H1 (cell line): ENCODE measurements at regions of chr19 and their contacts with region 1.

Region 1: GRCh38 chr19:49817964-49818648 is at the start of gene MED25:
- DNase-seq: peak in 1 of 2 experiments; percentile 95
- H3K4me3 ChIP-seq: peak within 1 kb of the TSS; percentile 60 to 91 (median 82)
- H3K27ac ChIP-seq: peak within 1 kb of the TSS; percentile 91
- H3K4me1 ChIP-seq: peaks cover 0 to 7% (median 4%) of the 10 kb centered on the region in 4 experiments; a peak in 3 of 7 replicates
- H3K27me3 ChIP-seq: no peaks in the 10 kb centered on the region
- CTCF ChIP-seq: no peak
- EP300 ChIP-seq: no peak
- POLR2A ChIP-seq: peak; percentile 63 to 78
- RAD21 ChIP-seq: no peak
- total RNA-seq, gene MED25: 71.4 and 73.9 TPM in 2 replicates

Region 2: DNA sequence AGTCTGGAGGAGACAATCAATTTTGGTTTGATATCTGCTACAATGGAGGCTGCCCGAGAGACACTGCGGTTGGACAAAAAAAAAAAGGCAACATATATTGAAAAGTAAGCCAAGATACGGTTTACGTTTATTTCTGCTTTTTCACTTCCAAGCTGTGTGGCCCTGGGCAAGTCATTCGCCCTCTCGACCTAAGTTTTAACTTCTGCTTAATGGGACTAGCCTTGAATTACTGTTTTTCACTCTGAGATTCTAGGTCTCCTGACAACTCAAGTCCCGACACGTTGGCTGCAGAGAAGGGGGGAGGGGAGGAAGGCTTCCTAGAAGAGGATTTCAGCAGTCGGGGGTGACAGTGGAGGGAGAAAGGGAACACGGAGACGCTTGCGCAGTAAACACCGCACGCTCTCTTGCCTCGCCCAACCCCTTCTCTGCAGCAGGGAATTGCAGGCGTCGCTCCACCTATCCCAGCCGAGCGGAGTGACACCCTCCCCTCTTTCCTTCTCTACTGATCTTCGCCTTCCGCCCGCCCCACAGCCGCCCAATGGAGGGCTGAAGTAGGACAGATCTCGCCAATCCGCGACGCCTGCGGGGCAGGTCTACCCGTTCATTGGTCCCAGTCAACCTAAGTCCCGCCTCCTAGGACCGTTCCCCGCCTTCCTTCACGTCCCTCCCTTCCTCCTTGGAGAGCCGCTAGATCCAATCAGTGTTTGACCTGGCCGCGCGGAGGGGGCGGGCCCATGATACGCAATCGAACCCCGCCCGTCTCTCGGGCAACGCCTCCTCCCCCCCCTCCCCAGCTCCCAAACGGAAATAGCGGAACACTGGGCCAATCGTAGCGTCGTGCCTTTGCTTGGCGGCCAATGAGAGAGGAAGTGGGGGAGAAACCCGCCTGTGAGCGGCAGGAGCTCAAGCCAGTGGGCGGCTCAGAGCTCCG is 51.8 kb before region 1 on chr19:
- CTCF ChIA-PET with region 1: no interaction called
- POLR2A ChIA-PET with region 1: interaction called, 15 read pairs
- DNase-seq: peak; percentile 96 to 100
- H3K4me3 ChIP-seq: peak overlapping the region; percentile 1 to 60 (median 35); a peak in 7 of 8 replicates
- H3K27ac ChIP-seq: peak overlapping the region; percentile 97
- H3K4me1 ChIP-seq: peaks cover 0 to 7% (median 3%) of the 10 kb centered on the region in 4 experiments; a peak in 5 of 7 replicates
- H3K27me3 ChIP-seq: no peaks in the 10 kb centered on the region
- CTCF ChIP-seq: no peak
- EP300 ChIP-seq: no peak
- POLR2A ChIP-seq: peak; percentile 54 to 98
- RAD21 ChIP-seq: no peak

Region 3: DNA sequence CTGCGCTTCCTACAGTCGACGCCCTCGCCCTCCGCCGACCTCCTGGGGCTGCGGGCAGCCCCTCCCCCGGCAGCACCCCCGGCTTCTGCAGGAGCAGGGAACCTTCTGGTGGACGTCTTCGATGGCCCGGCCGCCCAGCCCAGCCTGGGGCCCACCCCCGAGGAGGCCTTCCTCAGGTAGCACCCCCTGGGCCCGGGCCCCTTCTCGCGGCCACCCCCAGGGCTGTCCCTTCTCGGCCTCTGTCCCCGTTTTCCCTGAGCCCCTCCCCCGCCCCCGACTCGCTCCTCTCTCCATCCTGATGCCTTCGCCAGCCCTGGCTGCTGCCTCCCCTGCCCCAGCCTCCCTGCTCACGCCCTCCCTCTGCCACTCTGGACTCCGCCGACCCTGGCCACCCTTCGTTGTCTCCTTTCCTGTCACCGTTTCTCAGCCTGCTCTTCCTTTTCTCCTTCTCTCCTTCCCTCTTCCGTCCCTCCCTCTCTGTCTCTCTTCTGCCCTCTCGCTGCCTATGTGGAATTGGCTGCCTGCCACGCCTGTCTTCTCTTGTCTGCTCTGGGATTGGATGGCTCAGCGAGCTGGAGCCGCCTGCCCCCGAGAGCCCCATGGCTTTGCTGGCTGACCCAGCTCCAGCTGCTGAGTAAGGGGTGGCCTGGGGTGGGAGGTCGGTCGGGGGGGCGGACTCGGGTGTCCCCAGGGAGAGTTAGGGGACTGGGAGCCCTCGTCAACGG is 16.0 kb before region 1 on chr19:
- CTCF ChIA-PET with region 1: interaction called, 5 read pairs
- POLR2A ChIA-PET with region 1: interaction called, 11 read pairs
- DNase-seq: peak in 1 of 2 experiments; percentile 84
- H3K4me3 ChIP-seq: peak overlapping the region; percentile 15 to 52 (median 40); a peak in 7 of 8 replicates
- H3K27ac ChIP-seq: 0 out of 2 replicates have a peak overlapping the region, but pooled peaks have one; percentile 30
- H3K4me1 ChIP-seq: peaks cover 4 to 18% (median 6%) of the 10 kb centered on the region in 4 experiments
- H3K27me3 ChIP-seq: no peaks in the 10 kb centered on the region
- CTCF ChIP-seq: peak; percentile 4 to 31 (median 8); a peak in 2 of 4 replicates
- EP300 ChIP-seq: no peak
- POLR2A ChIP-seq: no peak
- RAD21 ChIP-seq: 0 out of 4 replicates have a peak, but pooled peaks of 1 of the 2 experiments have one; percentile 5

Region 4: DNA sequence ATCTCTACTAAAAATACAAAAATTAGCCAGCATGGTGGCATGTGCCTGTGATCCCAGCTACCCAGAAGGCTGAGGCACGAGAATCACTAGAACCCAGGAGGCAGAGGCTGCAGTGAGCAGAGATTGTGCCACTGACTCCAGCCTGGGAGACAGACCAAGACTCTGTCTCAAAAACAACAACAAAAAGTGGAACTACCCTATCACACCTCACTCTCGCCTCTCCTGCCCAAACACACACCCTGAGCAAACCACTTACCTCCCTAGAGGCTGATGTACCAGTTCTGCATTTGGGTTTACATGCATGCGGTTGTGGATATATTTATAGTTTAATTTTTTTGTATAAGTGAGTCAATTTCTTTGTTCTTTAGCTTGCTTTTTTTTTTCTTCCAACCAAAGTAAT is 25.2 kb after region 1 on chr19:
- CTCF ChIA-PET with region 1: interaction called, 9 read pairs
- POLR2A ChIA-PET with region 1: interaction called, 12 read pairs
- DNase-seq: no peak
- H3K4me3 ChIP-seq: no peak overlapping the region
- H3K27ac ChIP-seq: no peak overlapping the region
- H3K4me1 ChIP-seq: no peaks in the 10 kb centered on the region
- H3K27me3 ChIP-seq: no peaks in the 10 kb centered on the region
- CTCF ChIP-seq: no peak
- EP300 ChIP-seq: no peak
- POLR2A ChIP-seq: no peak
- RAD21 ChIP-seq: no peak

Region 5: DNA sequence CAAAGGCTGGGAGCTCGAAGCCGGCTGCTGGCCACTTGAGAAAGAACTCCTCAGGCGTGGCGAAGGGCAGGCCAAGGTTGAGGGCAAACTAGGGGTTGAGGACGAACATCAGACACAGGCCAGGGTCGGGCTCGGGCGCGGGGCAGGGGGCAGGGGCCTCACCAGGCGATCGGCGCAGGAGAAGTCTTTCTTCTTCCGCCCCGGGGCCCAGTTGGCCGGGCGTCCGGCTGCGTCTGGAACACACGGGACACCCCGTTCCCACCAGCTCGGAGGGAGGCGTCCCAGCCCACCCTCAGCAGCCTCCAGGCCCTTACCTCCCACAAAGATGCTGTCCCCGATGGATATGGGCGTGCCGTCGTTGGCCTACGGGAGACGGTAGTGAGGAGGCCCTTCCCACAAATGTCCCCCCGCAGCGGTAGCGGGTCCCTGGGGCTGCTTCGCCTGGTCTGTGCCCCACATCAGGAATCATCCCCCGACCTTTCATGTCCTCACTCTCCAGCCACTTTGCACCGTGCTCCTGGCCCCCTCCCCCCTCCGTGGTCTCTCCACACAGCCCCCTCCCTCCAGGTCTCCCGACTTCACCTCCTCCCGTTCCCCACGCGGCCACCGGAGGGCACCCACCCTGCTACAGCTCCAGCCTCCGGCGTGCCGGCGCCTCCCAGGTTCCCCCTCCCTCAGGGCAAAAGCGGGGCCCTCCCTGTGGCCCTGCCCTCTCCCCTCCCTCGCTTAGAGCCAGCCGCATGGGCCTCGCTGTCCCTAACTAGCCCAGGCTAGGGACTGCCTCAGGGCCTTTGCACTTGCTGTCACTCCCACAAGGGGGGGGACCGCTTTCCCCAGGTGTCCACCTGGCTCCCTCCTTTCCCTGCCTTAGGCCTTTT is 44.5 kb after region 1 on chr19:
- CTCF ChIA-PET with region 1: interaction called, 5 read pairs
- POLR2A ChIA-PET with region 1: interaction called, 20 read pairs
- DNase-seq: peak; percentile 62 to 94
- H3K4me3 ChIP-seq: no peak overlapping the region
- H3K27ac ChIP-seq: no peak overlapping the region
- H3K4me1 ChIP-seq: peaks cover 0 to 16% (median 4%) of the 10 kb centered on the region in 4 experiments; a peak in 5 of 7 replicates
- H3K27me3 ChIP-seq: no peaks in the 10 kb centered on the region
- CTCF ChIP-seq: peak; percentile 61 to 73 (median 65)
- EP300 ChIP-seq: no peak
- POLR2A ChIP-seq: no peak
- RAD21 ChIP-seq: peak; percentile 19 to 49; a peak in 3 of 4 replicates